MCF 10A (cell line): ENCODE measurements at regions of chr20 and their contacts with region 1.

Region 1: DNA sequence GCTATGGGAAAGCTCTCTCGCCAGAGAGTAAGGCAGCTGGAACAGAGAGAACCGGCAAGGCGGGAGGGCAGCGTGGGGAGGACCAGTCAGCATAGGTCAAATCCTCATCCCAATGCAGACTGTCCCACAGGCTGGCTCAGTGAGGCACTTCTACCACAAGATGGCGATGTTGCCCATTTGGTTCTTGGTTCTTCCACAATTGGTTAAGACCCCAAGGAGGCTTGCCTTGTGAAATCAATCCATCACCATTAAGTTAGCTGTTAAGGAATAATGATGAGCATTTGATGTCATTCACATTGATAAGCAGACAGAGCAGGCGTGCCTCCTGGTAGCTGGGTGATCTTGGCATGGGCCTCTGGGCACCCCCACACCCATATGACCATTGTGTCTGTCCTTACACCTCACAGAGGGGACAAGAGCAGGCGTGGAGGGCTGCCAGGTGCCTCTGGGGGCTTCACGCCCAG is 2.4 kb downstream of the CSTL1 start:
- DNase-seq: peak; percentile 85
- H3K4me3 Mint-ChIP-seq: no peak overlapping the region
- H3K27ac Mint-ChIP-seq: no peak overlapping the region
- H3K4me1 Mint-ChIP-seq: peaks cover 25% of the 10 kb centered on the region
- H3K27me3 Mint-ChIP-seq: no peaks in the 10 kb centered on the region
- CTCF ChIP-seq: peak; percentile 86

Region 2: GRCh38 chr20:23407781-23408464 is 34.0 kb before region 1 on chr20:
- CTCF ChIA-PET with region 1: interaction called, 19 read pairs
- POLR2A ChIA-PET with region 1: no interaction called
- intact Hi-C with region 1: no loop called
- DNase-seq: no peak
- H3K4me3 Mint-ChIP-seq: no peak overlapping the region
- H3K27ac Mint-ChIP-seq: no peak overlapping the region
- H3K4me1 Mint-ChIP-seq: peaks cover 25% of the 10 kb centered on the region
- H3K27me3 Mint-ChIP-seq: no peaks in the 10 kb centered on the region
- CTCF ChIP-seq: no peak

Region 3: GRCh38 chr20:23459461-23460150 is 17.7 kb after region 1 on chr20:
- CTCF ChIA-PET with region 1: interaction called, 30 read pairs
- POLR2A ChIA-PET with region 1: no interaction called
- intact Hi-C with region 1: no loop called
- DNase-seq: peak; percentile 18
- H3K4me3 Mint-ChIP-seq: no peak overlapping the region
- H3K27ac Mint-ChIP-seq: no peak overlapping the region
- H3K4me1 Mint-ChIP-seq: no peaks in the 10 kb centered on the region
- H3K27me3 Mint-ChIP-seq: no peaks in the 10 kb centered on the region
- CTCF ChIP-seq: no peak

Region 4: DNA sequence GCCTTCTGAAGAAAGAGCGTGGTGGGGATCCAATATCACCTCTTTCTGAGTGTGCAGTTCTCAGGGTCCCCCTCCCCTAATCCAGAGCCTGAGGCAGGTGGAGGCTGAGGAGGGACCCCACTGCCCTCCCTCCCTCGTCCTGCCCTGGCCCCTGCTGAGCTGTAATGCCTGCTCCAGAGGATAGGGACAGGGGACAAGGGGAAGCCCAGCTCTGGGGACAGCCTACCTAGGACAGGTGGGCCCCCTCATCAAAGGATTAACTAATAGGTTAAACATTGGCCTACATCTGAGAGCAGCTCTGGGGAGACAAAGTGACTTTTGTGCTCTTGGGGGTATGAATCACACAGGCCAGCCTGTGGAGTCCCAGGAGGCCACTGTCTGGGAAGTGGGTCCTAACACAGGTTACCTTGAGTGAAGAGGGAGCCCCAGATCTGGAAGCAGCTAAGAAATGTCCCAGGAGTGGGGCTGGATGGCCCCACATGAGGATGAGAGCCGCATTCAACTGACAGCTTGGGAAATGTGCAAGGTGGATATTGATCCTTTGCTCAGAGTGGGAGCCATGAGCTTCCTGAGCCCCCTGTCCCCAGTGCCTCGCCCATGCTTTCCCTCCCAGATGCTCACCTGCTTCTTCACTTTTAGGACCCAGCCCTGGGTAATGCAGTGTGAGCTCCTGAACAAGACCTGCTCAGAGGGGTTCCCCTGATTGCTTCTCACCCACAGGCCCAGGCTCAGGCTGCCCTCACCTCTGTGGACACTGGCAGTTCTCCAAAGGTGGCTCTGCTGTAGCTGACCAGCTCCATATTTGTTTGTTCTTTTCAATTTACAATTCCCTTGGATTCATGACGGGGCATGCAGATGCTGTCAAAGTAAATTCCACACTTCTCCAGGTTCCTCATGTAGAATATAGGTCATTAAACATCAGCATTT is 144.2 kb after region 1 on chr20:
- CTCF ChIA-PET with region 1: interaction called, 56 read pairs
- POLR2A ChIA-PET with region 1: interaction called, 3 read pairs
- intact Hi-C with region 1: no loop called
- DNase-seq: no peak
- H3K4me3 Mint-ChIP-seq: no peak overlapping the region
- H3K27ac Mint-ChIP-seq: no peak overlapping the region
- H3K4me1 Mint-ChIP-seq: peaks cover 21% of the 10 kb centered on the region
- H3K27me3 Mint-ChIP-seq: no peaks in the 10 kb centered on the region
- CTCF ChIP-seq: no peak

Region 5: GRCh38 chr20:23622839-23623343 is 181.0 kb after region 1 on chr20:
- CTCF ChIA-PET with region 1: interaction called, 10 read pairs
- POLR2A ChIA-PET with region 1: no interaction called
- intact Hi-C with region 1: no loop called
- DNase-seq: peak; percentile 94
- H3K4me3 Mint-ChIP-seq: peak overlapping the region; percentile 61
- H3K27ac Mint-ChIP-seq: peak overlapping the region; percentile 92
- H3K4me1 Mint-ChIP-seq: peaks cover 43% of the 10 kb centered on the region
- H3K27me3 Mint-ChIP-seq: no peaks in the 10 kb centered on the region
- CTCF ChIP-seq: no peak

Region 6: GRCh38 chr20:23995905-23996666 is 554.2 kb after region 1 on chr20:
- CTCF ChIA-PET with region 1: interaction called, 10 read pairs
- POLR2A ChIA-PET with region 1: no interaction called
- intact Hi-C with region 1: loop called (anchors 5 kb)
- DNase-seq: peak; percentile 43
- H3K4me3 Mint-ChIP-seq: no peak overlapping the region
- H3K27ac Mint-ChIP-seq: no peak overlapping the region
- H3K4me1 Mint-ChIP-seq: no peaks in the 10 kb centered on the region
- H3K27me3 Mint-ChIP-seq: no peaks in the 10 kb centered on the region
- CTCF ChIP-seq: peak; percentile 65